BJ (cell line): ENCODE measurements at regions of chr18 and their contacts with region 1.

Region 1: GRCh38 chr18:3585656-3586509 is 135.9 kb downstream of the TGIF1 start:
- DNase-seq: no peak
- H3K4me3 ChIP-seq: no peak overlapping the region
- H3K27me3 ChIP-seq: no peaks in the 10 kb centered on the region
- CTCF ChIP-seq: peak; percentile 85

Region 2: DNA sequence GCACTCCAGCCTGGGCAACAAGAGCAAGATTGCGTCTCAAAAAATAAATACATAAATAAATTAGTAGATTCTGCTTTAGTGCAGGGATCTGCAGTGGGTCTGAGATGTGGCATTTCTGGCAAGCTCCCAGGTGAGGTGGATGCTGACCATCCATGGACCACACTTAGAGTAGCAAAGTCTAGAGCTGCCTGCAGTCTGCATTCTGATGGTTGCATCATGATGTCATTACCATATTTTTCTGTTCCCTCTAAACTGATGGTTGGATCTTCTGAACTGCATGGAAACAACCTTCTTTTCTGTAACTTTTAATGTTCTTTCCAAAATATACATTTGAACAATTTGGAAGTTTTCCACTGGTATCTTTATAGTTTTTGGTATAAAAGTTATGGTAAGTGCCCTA is 281.1 kb before region 1 on chr18:
- CTCF ChIA-PET with region 1: no interaction called
- POLR2A ChIA-PET with region 1: no interaction called
- DNase-seq: no peak
- H3K4me3 ChIP-seq: no peak overlapping the region
- H3K27me3 ChIP-seq: no peaks in the 10 kb centered on the region
- CTCF ChIP-seq: no peak

Region 3: GRCh38 chr18:3447895-3448837 is 137.7 kb before region 1 on chr18:
- CTCF ChIA-PET with region 1: interaction called, 43 read pairs
- POLR2A ChIA-PET with region 1: no interaction called
- DNase-seq: peak; percentile 92
- H3K4me3 ChIP-seq: peak overlapping the region; percentile 96
- H3K27me3 ChIP-seq: no peaks in the 10 kb centered on the region
- CTCF ChIP-seq: 0 out of 2 replicates have a peak, but pooled peaks have one; percentile 13